GM12878 (cell line): ENCODE measurements at regions of chr3 and their contacts with region 1.

Region 1: GRCh38 chr3:17742108-17742879 is at the start of gene TBC1D5:
- DNase-seq: peak; percentile 91
- ATAC-seq: peak; percentile 82
- H3K4me3 ChIP-seq: peak within 1 kb of the TSS; percentile 94
- H3K27ac ChIP-seq: peak within 1 kb of the TSS; percentile 94
- H3K4me1 ChIP-seq: peaks cover 13% of the 10 kb centered on the region
- H3K27me3 ChIP-seq: no peaks in the 10 kb centered on the region
- CTCF ChIP-seq: peak in 1 of 3 experiments; percentile 6; a peak in 1 of 6 replicates
- EP300 ChIP-seq: no peak
- POLR2A ChIP-seq: peak; percentile 90
- RAD21 ChIP-seq: no peak
- polyA plus RNA-seq, gene TBC1D5: 5.5 to 5.8 TPM

Region 2: DNA sequence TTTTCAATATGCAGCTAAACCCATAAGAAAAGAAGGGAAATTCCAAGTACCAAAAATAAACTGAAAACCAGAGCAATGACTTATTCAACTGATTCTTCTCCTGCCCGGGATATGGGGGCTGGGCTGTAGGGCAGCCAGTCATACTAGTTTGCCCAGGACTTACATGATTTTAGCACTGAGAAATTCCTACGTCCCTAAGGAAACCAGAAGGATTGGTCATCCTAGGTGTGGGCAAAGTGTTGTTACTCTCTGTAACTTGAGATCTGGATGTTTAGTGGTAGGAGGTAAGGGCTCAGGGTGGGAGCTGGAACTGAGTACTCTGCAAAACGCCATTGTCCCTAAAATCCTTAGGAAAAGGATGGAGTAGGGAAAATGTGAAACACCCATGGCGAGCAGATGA is 1135.9 kb before region 1 on chr3:
- CTCF ChIA-PET with region 1: no interaction called
- POLR2A ChIA-PET with region 1: no interaction called
- RAD21 ChIA-PET with region 1: no interaction called
- SMC1A ChIA-PET with region 1: no interaction called
- in situ Hi-C with region 1: no loop called
- intact Hi-C with region 1: no loop called
- DNase-seq: no peak
- ATAC-seq: no peak
- H3K4me3 ChIP-seq: no peak overlapping the region
- H3K27ac ChIP-seq: no peak overlapping the region
- H3K4me1 ChIP-seq: no peaks in the 10 kb centered on the region
- H3K27me3 ChIP-seq: no peaks in the 10 kb centered on the region
- CTCF ChIP-seq: no peak
- EP300 ChIP-seq: no peak
- POLR2A ChIP-seq: no peak
- RAD21 ChIP-seq: no peak

Region 3: DNA sequence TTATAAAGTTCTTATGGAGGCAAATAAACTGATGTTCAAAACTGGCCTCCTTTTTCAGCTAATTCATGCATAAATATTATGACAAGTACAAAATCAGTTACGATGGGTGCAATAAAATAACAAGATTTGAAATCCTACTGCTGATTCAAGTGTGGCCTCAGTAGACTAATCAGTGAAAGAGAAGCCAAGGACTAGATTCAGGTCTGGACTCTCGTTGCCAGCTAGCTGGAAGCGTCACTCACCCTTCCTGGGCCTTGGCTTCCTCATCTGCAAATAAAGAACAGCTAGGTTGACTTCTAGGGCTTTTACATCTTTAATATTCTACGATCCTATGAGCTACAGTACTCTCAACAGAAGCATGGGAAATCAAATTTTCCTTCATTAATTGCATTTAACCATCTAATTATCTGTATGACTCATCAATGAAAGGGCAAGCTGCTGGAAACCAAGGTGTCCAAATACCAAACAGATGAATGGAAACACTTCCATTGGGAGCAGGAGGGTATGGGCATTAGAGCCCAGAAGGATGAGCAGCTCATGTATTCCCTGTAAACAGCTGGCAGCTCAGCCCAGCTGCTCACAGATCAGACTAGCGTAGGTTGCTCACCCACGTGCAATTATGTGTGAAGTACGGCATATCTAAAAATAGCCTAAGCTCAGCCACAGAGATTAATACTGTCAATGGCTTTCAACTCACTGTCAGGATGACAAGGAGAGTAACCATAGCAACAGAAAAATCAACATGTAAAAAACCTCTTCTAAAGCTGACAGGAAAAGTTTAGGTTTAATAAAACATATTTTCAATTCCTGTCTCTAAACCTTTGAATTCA is 562.7 kb before region 1 on chr3:
- CTCF ChIA-PET with region 1: no interaction called
- POLR2A ChIA-PET with region 1: no interaction called
- RAD21 ChIA-PET with region 1: no interaction called
- SMC1A ChIA-PET with region 1: no interaction called
- in situ Hi-C with region 1: no loop called
- intact Hi-C with region 1: no loop called
- DNase-seq: peak; percentile 56
- ATAC-seq: peak; percentile 84
- H3K4me3 ChIP-seq: no peak overlapping the region
- H3K27ac ChIP-seq: no peak overlapping the region
- H3K4me1 ChIP-seq: peaks cover 38% of the 10 kb centered on the region
- H3K27me3 ChIP-seq: no peaks in the 10 kb centered on the region
- CTCF ChIP-seq: no peak
- EP300 ChIP-seq: peak; percentile 82 to 97
- POLR2A ChIP-seq: no peak
- RAD21 ChIP-seq: no peak

Region 4: GRCh38 chr3:17579289-17580031 is 162.8 kb before region 1 on chr3:
- CTCF ChIA-PET with region 1: no interaction called
- POLR2A ChIA-PET with region 1: no interaction called
- RAD21 ChIA-PET with region 1: interaction called, 3 read pairs
- SMC1A ChIA-PET with region 1: no interaction called
- in situ Hi-C with region 1: no loop called
- intact Hi-C with region 1: loop called (anchors 5 kb)
- DNase-seq: peak; percentile 60
- ATAC-seq: peak; percentile 98
- H3K4me3 ChIP-seq: no peak overlapping the region
- H3K27ac ChIP-seq: no peak overlapping the region
- H3K4me1 ChIP-seq: peaks cover 31% of the 10 kb centered on the region
- H3K27me3 ChIP-seq: no peaks in the 10 kb centered on the region
- CTCF ChIP-seq: no peak
- EP300 ChIP-seq: peak; percentile 31 to 67; a peak in 2 of 4 replicates
- POLR2A ChIP-seq: no peak
- RAD21 ChIP-seq: no peak